MCF 10A (cell line): ENCODE measurements at regions of chr1 and their contacts with region 1.

Region 1: GRCh38 chr1:204128964-204129896 is 22.6 kb downstream of the ETNK2 start:
- DNase-seq: peak; percentile 86
- H3K4me3 Mint-ChIP-seq: peak overlapping the region; percentile 68
- H3K27ac Mint-ChIP-seq: peak overlapping the region; percentile 63
- H3K4me1 Mint-ChIP-seq: peaks cover 58% of the 10 kb centered on the region
- H3K27me3 Mint-ChIP-seq: no peaks in the 10 kb centered on the region
- CTCF ChIP-seq: peak; percentile 100

Region 2: DNA sequence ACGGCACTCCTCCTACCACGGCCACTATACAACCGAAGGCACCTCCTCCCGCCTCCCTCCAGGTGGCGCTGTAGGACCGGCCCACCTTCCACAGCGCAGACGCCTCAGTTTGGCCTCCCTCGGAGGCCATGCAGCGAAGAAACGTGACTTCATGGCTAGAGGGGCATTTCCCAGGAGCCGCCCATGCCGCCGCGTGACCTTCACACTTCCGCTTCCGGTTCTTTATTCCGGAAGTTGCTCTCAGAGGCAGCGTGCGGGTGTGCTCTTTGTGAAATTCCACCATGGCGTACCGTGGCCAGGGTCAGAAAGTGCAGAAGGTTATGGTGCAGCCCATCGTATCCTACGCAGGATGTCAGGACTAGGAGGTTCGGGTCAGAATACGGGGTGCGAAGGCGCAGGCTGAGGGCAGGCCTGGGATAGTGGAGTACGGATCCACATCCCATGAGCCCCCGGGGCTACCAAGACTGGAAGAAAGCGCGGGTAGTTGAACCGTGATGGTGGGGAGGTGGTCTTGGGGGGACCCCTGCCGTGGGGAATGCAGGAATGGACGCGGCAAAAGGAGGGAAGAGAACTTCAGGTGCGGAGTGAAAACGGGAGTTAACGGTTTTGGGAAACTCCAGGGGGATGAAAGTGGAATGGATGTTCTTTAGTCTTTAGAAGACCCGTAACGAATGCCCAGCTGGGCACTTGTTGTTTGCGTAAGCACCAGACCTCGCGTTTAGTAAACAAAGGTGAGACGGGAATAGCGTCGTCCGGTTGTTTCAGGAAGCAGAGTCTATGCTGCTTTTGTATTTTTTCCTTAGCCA is 267.6 kb before region 1 on chr1 and contains the start of gene SNRPE:
- CTCF ChIA-PET with region 1: interaction called, 452 read pairs
- POLR2A ChIA-PET with region 1: interaction called, 174 read pairs
- intact Hi-C with region 1: loop called (anchors 1 kb)
- DNase-seq: peak; percentile 100
- H3K4me3 Mint-ChIP-seq: peak within 1 kb of the TSS; percentile 100
- H3K27ac Mint-ChIP-seq: peak within 1 kb of the TSS; percentile 100
- H3K4me1 Mint-ChIP-seq: peaks cover 43% of the 10 kb centered on the region
- H3K27me3 Mint-ChIP-seq: no peaks in the 10 kb centered on the region
- CTCF ChIP-seq: peak; percentile 100
- total RNA-seq, gene SNRPE: 358 and 423 TPM in 2 replicates

Region 3: GRCh38 chr1:203888807-203889251 is 240.4 kb before region 1 on chr1:
- CTCF ChIA-PET with region 1: interaction called, 13 read pairs
- POLR2A ChIA-PET with region 1: interaction called, 9 read pairs
- intact Hi-C with region 1: loop called (anchors 1 kb)
- DNase-seq: peak; percentile 77
- H3K4me3 Mint-ChIP-seq: peak overlapping the region; percentile 11
- H3K27ac Mint-ChIP-seq: peak overlapping the region; percentile 98
- H3K4me1 Mint-ChIP-seq: peaks cover 27% of the 10 kb centered on the region
- H3K27me3 Mint-ChIP-seq: no peaks in the 10 kb centered on the region
- CTCF ChIP-seq: no peak

Region 4: GRCh38 chr1:204072931-204073836 is 56.0 kb before region 1 on chr1 and contains the start of gene SOX13:
- CTCF ChIA-PET with region 1: interaction called, 59 read pairs
- POLR2A ChIA-PET with region 1: interaction called, 38 read pairs
- intact Hi-C with region 1: loop called (anchors 1 kb)
- DNase-seq: peak; percentile 98
- H3K4me3 Mint-ChIP-seq: peak within 1 kb of the TSS; percentile 75
- H3K27ac Mint-ChIP-seq: peak within 1 kb of the TSS; percentile 55
- H3K4me1 Mint-ChIP-seq: peaks cover 20% of the 10 kb centered on the region
- H3K27me3 Mint-ChIP-seq: no peaks in the 10 kb centered on the region
- CTCF ChIP-seq: peak; percentile 34
- total RNA-seq, gene SOX13: 23.7 and 32.8 TPM in 2 replicates

Region 5: DNA sequence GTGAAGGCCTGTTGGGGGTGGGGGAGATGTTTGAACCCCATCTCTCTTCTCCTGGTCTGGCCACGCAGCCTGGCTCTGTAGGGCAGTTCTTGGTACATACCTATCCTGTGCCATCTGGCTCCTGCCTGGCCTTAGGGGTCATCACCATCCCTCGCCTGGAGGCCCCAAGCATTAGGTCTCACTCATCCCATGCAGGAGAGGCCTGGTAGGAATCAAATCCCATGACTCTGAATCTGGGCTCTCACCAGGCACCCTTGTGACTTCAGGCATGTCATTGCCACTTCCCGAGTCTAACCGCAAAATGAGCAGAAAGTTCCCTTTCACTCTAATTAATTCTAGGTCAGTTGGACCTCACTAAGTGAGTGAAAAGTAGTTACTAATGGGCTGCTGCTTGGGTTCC is 14.6 kb before region 1 on chr1:
- CTCF ChIA-PET with region 1: interaction called, 36 read pairs
- POLR2A ChIA-PET with region 1: no interaction called
- intact Hi-C with region 1: no loop called
- DNase-seq: no peak
- H3K4me3 Mint-ChIP-seq: no peak overlapping the region
- H3K27ac Mint-ChIP-seq: no peak overlapping the region
- H3K4me1 Mint-ChIP-seq: peaks cover 16% of the 10 kb centered on the region
- H3K27me3 Mint-ChIP-seq: no peaks in the 10 kb centered on the region
- CTCF ChIP-seq: no peak

Region 6: DNA sequence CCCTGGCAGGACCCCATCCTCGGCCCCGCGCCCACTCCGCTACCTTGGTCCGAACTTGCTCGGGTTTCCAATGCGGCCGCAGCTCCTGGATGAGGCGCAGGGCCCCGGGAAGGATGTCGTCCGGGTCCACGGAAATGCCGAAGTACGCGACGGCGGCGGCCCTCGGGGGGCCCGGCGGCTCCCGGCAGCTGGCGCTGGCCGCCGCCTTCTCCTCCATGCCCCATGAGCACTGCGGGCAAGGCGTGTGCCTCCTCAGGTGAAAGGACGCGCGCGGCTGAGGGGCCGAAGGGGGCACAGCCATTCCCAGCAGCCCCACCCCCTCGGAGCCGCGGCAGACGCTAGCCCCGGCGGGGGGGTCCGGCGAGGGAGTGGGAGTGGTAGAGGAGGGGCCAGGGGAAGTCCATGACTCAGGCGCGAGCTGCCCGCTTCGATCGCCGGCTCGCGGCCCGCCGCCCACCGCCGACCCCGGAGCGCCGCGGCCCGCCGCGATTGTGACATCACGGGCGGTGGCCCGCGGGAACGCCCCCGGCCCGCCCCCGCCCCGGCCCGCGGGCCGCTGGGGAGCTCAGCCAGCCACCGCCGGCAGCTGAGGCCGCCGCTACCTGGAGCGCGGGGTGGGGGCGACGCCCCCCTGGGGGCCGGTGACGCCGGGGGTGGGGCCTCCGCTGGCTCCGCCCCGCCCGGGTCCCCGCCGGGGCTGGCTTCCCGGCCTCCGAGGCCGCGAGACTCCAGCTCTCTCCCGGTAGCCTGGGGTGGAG is 22.5 kb after region 1 on chr1 and contains the start of gene ETNK2:
- CTCF ChIA-PET with region 1: interaction called, 40 read pairs
- POLR2A ChIA-PET with region 1: interaction called, 20 read pairs
- intact Hi-C with region 1: no loop called
- DNase-seq: peak; percentile 36
- H3K4me3 Mint-ChIP-seq: peak within 1 kb of the TSS; percentile 68
- H3K27ac Mint-ChIP-seq: peak within 1 kb of the TSS; percentile 78
- H3K4me1 Mint-ChIP-seq: peaks cover 48% of the 10 kb centered on the region
- H3K27me3 Mint-ChIP-seq: no peaks in the 10 kb centered on the region
- CTCF ChIP-seq: no peak
- total RNA-seq, gene ETNK2: 6.7 and 9.5 TPM in 2 replicates